ENCODE measurements at regions of chr16 and their contacts with region 1.

Region 1: GRCh38 chr16:83826146-83826913 is 18.6 kb downstream of the HSBP1 start:
- DNase-seq: peak; percentile 52
- ATAC-seq: peak; percentile 92
- H3K4me3 ChIP-seq: peak overlapping the region in 1 of 3 experiments; percentile 3; a peak in 1 of 6 replicates
- H3K27ac ChIP-seq: no peak overlapping the region
- H3K4me1 ChIP-seq: no peaks in the 10 kb centered on the region
- H3K27me3 ChIP-seq: peaks cover 4 to 59% of the 10 kb centered on the region in 2 experiments; a peak in 3 of 5 replicates
- CTCF ChIP-seq: peak; percentile 97
- EP300 ChIP-seq: no peak
- POLR2A ChIP-seq: no peak
- RAD21 ChIP-seq: peak; percentile 91

Region 2: GRCh38 chr16:83878838-83879237 is 52.5 kb after region 1 on chr16:
- CTCF ChIA-PET with region 1: interaction called, 40 read pairs
- POLR2A ChIA-PET with region 1: no interaction called
- in situ Hi-C with region 1: loop called (anchors 5 kb)
- intact Hi-C with region 1: loop called (anchors 1 kb)
- DNase-seq: peak; percentile 59
- ATAC-seq: no peak
- H3K4me3 ChIP-seq: no peak overlapping the region
- H3K27ac ChIP-seq: no peak overlapping the region
- H3K4me1 ChIP-seq: no peaks in the 10 kb centered on the region
- H3K27me3 ChIP-seq: peaks cover 0 to 42% of the 10 kb centered on the region in 2 experiments; a peak in 3 of 5 replicates
- CTCF ChIP-seq: peak; percentile 56
- EP300 ChIP-seq: no peak
- POLR2A ChIP-seq: no peak
- RAD21 ChIP-seq: peak; percentile 71

Region 3: GRCh38 chr16:84062734-84063640 is 236.7 kb after region 1 on chr16:
- CTCF ChIA-PET with region 1: interaction called, 3 read pairs
- POLR2A ChIA-PET with region 1: no interaction called
- in situ Hi-C with region 1: no loop called
- intact Hi-C with region 1: loop called (anchors 1 kb)
- DNase-seq: peak; percentile 59
- ATAC-seq: peak; percentile 97
- H3K4me3 ChIP-seq: no peak overlapping the region
- H3K27ac ChIP-seq: no peak overlapping the region
- H3K4me1 ChIP-seq: no peaks in the 10 kb centered on the region
- H3K27me3 ChIP-seq: no peaks in the 10 kb centered on the region
- CTCF ChIP-seq: peak; percentile 95
- EP300 ChIP-seq: no peak
- POLR2A ChIP-seq: no peak
- RAD21 ChIP-seq: peak; percentile 72